Activated naive CD4-positive, alpha-beta T cell treated with anti-CD3 and anti-CD28 coated beads for 36 hours (primary cell): ENCODE measurements at regions of chr1 and their contacts with region 1.

Region 1: DNA sequence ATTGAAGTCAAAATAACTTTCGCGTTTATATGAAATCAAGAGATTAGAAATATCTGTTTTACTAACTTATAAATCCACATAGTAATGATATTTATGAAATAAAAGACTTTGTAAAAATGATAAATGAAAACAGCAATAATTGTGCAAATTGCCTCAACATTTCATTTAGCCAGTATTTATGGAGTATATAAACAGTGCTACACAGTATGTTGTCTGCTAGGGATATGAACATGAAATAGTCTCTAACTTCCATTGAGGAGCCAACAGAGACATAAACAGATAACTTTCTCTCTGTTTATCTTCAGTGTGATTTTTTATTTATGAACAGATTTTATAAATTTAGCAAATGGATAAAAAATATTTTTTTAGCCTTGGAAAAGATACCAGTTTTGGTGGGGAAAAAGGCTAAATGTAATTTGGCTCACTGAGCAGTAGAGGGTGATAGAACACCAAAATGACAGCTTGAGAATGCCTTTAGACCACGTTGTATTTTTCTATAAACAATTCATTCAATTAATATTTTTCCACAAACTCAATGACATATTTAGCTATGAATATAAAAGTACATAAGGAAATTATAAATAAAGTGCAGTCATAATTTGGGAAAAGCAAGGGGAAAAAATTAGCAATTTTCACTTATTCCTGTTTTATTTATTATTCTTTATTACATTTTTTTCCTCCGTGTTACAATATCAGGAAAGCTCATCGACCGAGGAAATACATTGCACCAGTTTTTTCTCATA is 47.5 kb upstream of the EEIG2 start:
- DNase-seq: no peak
- H3K4me3 Mint-ChIP-seq: no peak overlapping the region
- H3K27ac Mint-ChIP-seq: no peak overlapping the region
- H3K4me1 Mint-ChIP-seq: no peaks in the 10 kb centered on the region
- H3K27me3 Mint-ChIP-seq: peaks cover 1% of the 10 kb centered on the region

Region 2: DNA sequence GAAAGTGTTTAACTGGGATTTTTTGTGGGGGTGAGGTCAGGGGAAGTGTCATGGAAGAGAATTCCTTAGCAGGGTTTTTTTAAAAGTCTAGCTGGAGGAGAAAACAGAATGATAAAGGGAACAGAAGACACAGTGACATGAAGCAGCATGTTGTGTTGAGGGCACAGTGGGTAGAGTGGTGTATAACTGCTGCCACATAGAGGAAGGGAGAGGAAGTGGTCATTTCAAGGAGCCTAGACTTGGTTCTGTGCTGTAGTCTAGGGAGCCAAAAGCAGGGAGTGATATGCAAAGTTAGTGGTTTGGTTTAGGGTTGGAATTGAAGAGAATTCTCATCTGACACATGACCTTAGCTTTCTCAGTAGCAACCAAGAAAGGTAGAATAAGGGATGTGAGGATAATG is 57.7 kb after region 1 on chr1:
- CTCF ChIA-PET with region 1: interaction called, 8 read pairs
- intact Hi-C with region 1: loop called (anchors 2 kb)
- DNase-seq: peak; percentile 41
- H3K4me3 Mint-ChIP-seq: no peak overlapping the region
- H3K27ac Mint-ChIP-seq: no peak overlapping the region
- H3K4me1 Mint-ChIP-seq: no peaks in the 10 kb centered on the region
- H3K27me3 Mint-ChIP-seq: no peaks in the 10 kb centered on the region

Region 3: GRCh38 chr1:108708691-108709660 is 196.6 kb after region 1 on chr1:
- CTCF ChIA-PET with region 1: no interaction called
- intact Hi-C with region 1: loop called (anchors 1 kb)
- DNase-seq: peak; percentile 81
- H3K4me3 Mint-ChIP-seq: no peak overlapping the region
- H3K27ac Mint-ChIP-seq: no peak overlapping the region
- H3K4me1 Mint-ChIP-seq: peaks cover 11% of the 10 kb centered on the region
- H3K27me3 Mint-ChIP-seq: no peaks in the 10 kb centered on the region

Region 4: DNA sequence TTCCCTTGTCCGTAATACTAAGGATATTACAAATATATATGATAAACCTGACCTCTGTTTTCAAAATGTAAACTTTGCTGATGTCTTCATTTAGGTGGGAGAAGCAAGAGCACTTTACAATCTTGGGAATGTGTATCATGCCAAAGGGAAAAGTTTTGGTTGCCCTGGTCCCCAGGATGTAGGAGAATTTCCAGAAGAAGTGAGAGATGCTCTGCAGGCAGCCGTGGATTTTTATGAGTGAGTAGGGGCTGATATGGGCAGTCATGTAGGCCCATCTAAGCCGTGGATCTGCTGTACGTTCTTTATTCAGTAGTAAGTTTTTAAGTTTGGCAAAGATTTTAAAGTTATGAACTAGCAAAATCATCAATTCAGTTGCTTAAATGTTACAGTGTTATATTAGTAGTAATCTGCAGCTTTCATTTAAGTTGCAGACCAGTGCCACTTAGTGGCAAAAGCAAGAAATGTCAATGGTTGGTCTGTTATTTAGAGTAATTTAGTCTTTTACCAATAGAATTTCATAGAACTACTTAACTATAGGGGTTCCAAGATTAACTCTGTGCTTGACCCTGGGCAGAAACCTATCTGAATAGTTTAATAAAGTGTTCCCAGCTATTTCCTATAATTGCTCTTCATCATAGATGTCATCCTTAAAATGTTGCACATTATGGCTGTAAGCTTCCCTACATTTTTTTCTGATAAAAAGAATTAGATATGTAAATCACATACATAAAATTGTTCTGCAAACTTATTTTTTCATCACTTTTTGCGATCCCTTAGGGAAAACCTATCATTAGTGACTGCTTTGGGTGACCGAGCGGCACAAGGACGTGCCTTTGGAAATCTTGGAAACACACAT is 385.7 kb after region 1 on chr1:
- CTCF ChIA-PET with region 1: interaction called, 3 read pairs
- intact Hi-C with region 1: loop called (anchors 1 kb)
- DNase-seq: peak; percentile 43
- H3K4me3 Mint-ChIP-seq: no peak overlapping the region
- H3K27ac Mint-ChIP-seq: no peak overlapping the region
- H3K4me1 Mint-ChIP-seq: no peaks in the 10 kb centered on the region
- H3K27me3 Mint-ChIP-seq: peaks cover 2% of the 10 kb centered on the region